Tibial artery (tissue), 4 donors: ENCODE measurements at regions of chr1 and their contacts with region 1.

Region 1: GRCh38 chr1:33616773-33617172 is 144.3 kb downstream of the ZSCAN20 start:
- DNase-seq: no peak
- H3K4me3 ChIP-seq: no peak overlapping the region
- H3K27ac ChIP-seq: no peak overlapping the region
- H3K4me1 ChIP-seq: no peaks in the 10 kb centered on the region
- H3K27me3 ChIP-seq: peaks cover 0 to 18% of the 10 kb centered on the region in 2 donors
- CTCF ChIP-seq: no peak

Region 2: GRCh38 chr1:33094971-33095604 is 521.7 kb before region 1 on chr1:
- intact Hi-C with region 1: loop called (anchors 10 kb)
- DNase-seq: peak in 1 of 2 donors; percentile 38
- H3K4me3 ChIP-seq: no peak overlapping the region
- H3K27ac ChIP-seq: no peak overlapping the region
- H3K4me1 ChIP-seq: peaks cover 0 to 10% (median 0%) of the 10 kb centered on the region in 4 donors
- H3K27me3 ChIP-seq: no peaks in the 10 kb centered on the region
- CTCF ChIP-seq: peak; percentile 87 to 98